ENCODE measurements at regions of chr2 and their contacts with region 1.

Region 1: DNA sequence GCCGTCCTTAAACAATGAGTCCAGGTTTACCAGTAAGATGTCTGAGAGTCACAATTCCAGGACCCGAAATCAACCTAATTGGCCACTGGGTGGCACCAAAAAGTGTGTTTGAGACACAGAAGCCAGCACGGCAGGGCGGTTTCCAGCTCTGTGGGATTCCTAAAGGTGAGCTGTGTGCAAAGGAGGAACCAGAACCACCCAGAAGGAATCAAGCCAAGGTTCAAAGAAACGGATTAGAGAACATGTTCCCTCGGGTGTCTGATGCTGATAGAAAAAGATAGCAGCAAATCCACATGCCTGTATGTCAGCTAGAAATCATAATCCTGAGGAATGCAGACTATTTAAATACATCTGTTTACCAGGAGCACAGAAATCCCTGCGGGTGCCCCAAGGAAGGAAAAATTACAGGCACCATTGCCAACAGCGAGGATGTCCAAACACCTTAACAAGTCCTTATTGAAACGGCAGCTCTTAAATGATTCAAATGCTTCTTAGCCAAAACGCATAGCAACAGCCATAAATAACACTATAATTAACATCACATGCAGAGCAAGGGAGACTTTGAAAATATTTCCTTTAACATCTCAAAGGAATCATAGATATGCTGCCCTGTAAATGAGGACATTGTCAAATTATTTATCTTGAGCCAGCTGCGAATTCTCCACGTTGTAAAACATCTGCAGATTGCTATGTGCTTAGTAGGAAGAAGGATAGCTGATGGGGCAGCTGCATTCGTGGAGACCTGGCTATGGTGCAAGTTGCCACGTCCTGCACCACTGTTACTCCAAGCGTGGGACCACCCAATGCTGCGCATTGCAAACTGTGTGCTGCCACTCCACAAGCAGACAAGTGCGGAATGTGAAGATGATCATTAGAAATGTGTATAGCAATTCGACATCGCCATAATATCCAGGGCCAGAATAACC is 318.7 kb upstream of the NCKAP5 start:
- DNase-seq: peak; percentile 70
- ATAC-seq: peak; percentile 94
- H3K4me3 ChIP-seq: no peak overlapping the region
- H3K27ac ChIP-seq: no peak overlapping the region
- H3K4me1 ChIP-seq: no peaks in the 10 kb centered on the region
- H3K27me3 ChIP-seq: no peaks in the 10 kb centered on the region
- CTCF ChIP-seq: peak; percentile 61 to 76 (median 71)
- POLR2A ChIP-seq: no peak
- RAD21 ChIP-seq: peak; percentile 82

Region 2: DNA sequence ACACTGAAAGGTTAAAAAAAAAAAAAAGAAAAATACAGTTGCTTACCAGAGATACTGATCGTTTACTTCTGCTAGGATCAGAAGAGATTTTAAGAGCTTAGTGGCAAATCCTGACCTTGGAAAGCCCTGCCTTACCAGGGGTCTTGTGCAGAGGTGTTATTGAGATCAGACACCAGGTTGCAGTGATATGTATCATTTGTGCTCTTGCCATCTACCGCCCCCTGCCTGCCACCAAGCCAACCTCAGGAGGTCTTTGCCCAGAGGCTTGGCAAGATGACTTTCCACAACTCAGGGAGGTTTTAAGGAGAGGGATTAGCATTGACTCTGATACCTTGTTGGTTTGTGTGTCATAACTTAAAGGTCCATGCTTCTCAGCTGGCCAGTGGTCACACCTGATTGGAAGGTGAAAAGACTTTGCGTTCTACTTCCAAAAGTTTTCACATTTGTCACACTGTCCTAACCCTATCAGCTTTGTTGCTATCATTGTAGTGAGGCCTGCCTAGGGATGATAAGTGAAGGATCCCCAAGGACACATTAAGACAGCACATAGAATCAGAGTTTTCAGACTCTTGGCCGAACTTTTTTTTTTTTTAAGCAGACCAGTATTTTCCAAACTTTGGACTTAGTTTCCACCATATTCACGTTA is 320.7 kb after region 1 on chr2:
- CTCF ChIA-PET with region 1: interaction called, 7 read pairs
- POLR2A ChIA-PET with region 1: no interaction called
- RAD21 ChIA-PET with region 1: interaction called in 1 of 2 experiments, 3 read pairs
- intact Hi-C with region 1: loop called (anchors 5 kb)
- DNase-seq: peak; percentile 47
- ATAC-seq: peak; percentile 99
- H3K4me3 ChIP-seq: no peak overlapping the region
- H3K27ac ChIP-seq: no peak overlapping the region
- H3K4me1 ChIP-seq: no peaks in the 10 kb centered on the region
- H3K27me3 ChIP-seq: no peaks in the 10 kb centered on the region
- CTCF ChIP-seq: peak; percentile 78 to 87 (median 85)
- POLR2A ChIP-seq: no peak
- RAD21 ChIP-seq: peak; percentile 86

Region 3: DNA sequence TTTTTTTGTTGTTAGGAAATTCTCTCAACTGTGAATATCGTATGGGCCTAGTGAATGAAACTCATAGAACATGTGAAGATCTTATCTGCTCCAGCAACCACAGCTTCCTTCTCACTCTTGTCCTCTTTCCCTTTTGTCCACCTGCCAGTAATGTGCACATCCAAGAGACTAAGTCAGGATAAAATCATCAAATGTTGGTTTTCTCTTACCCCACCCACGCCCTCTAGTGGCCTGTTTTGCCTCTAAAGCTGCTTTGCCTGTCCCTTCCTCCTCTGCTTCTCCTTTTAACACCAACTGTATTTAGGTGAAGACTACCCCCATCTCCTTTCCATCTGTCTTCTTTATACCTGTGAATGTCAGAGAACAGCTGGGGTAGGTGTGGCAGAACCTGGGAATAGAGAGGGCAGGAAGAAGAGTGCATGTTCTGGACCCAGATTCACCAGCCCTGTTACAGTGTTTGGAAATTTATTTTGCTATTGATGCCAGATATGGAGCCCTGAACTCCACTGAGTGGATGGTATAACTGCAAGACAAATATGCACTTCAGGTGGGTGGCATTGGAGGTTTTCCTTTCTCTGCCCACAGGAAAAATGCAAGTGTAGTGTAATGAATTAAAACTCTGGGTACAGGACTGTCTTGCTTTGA is 358.5 kb after region 1 on chr2:
- CTCF ChIA-PET with region 1: interaction called, 11 read pairs
- POLR2A ChIA-PET with region 1: no interaction called
- RAD21 ChIA-PET with region 1: interaction called in 1 of 2 experiments, 3 read pairs
- intact Hi-C with region 1: loop called (anchors 2 kb)
- DNase-seq: peak; percentile 35
- ATAC-seq: peak; percentile 81
- H3K4me3 ChIP-seq: no peak overlapping the region
- H3K27ac ChIP-seq: no peak overlapping the region
- H3K4me1 ChIP-seq: no peaks in the 10 kb centered on the region
- H3K27me3 ChIP-seq: no peaks in the 10 kb centered on the region
- CTCF ChIP-seq: peak; percentile 62 to 87 (median 83)
- POLR2A ChIP-seq: no peak
- RAD21 ChIP-seq: peak; percentile 71

Region 4: GRCh38 chr2:134411828-134412638 is 525.0 kb after region 1 on chr2:
- CTCF ChIA-PET with region 1: interaction called, 20 read pairs
- POLR2A ChIA-PET with region 1: no interaction called
- RAD21 ChIA-PET with region 1: interaction called, 3 to 7 read pairs
- intact Hi-C with region 1: loop called (anchors 1 kb)
- DNase-seq: peak; percentile 44
- ATAC-seq: peak; percentile 95
- H3K4me3 ChIP-seq: no peak overlapping the region
- H3K27ac ChIP-seq: no peak overlapping the region
- H3K4me1 ChIP-seq: peaks cover 5% of the 10 kb centered on the region in 2 experiments; a peak in 1 of 4 replicates
- H3K27me3 ChIP-seq: no peaks in the 10 kb centered on the region
- CTCF ChIP-seq: peak; percentile 50 to 68 (median 56); a peak in 5 of 6 replicates
- POLR2A ChIP-seq: no peak
- RAD21 ChIP-seq: peak; percentile 81

Region 5: GRCh38 chr2:134452042-134452733 is 565.2 kb after region 1 on chr2:
- CTCF ChIA-PET with region 1: interaction called, 20 read pairs
- POLR2A ChIA-PET with region 1: no interaction called
- RAD21 ChIA-PET with region 1: interaction called in 1 of 2 experiments, 4 read pairs
- intact Hi-C with region 1: loop called (anchors 2 kb)
- DNase-seq: no peak
- ATAC-seq: no peak
- H3K4me3 ChIP-seq: no peak overlapping the region
- H3K27ac ChIP-seq: no peak overlapping the region
- H3K4me1 ChIP-seq: no peaks in the 10 kb centered on the region
- H3K27me3 ChIP-seq: no peaks in the 10 kb centered on the region
- CTCF ChIP-seq: no peak
- POLR2A ChIP-seq: no peak
- RAD21 ChIP-seq: no peak

Measured in HCT116 (cell line).